ENCODE measurements at regions of chr1 and their contacts with region 1.

Region 1: GRCh38 chr1:60281360-60281932 is 207.9 kb upstream of the C1orf87 start:
- DNase-seq: peak; percentile 55
- H3K4me3 ChIP-seq: no peak overlapping the region
- H3K27ac ChIP-seq: no peak overlapping the region
- H3K4me1 ChIP-seq: peaks cover 2% of the 10 kb centered on the region
- H3K27me3 ChIP-seq: no peaks in the 10 kb centered on the region
- CTCF ChIP-seq: peak; percentile 94 to 98

Region 2: GRCh38 chr1:59776960-59777852 is 504.2 kb before region 1 on chr1:
- CTCF ChIA-PET with region 1: no interaction called
- dilution Hi-C with region 1: no loop called
- in situ Hi-C with region 1: no loop called
- intact Hi-C with region 1: no loop called
- DNase-seq: no peak
- H3K4me3 ChIP-seq: no peak overlapping the region
- H3K27ac ChIP-seq: no peak overlapping the region
- H3K4me1 ChIP-seq: no peaks in the 10 kb centered on the region
- H3K27me3 ChIP-seq: no peaks in the 10 kb centered on the region
- CTCF ChIP-seq: no peak

Region 3: GRCh38 chr1:60153961-60154360 is 127.5 kb before region 1 on chr1:
- CTCF ChIA-PET with region 1: interaction called, 6 read pairs
- dilution Hi-C with region 1: no loop called
- in situ Hi-C with region 1: no loop called
- intact Hi-C with region 1: loop called (anchors 2 kb)
- DNase-seq: no peak
- H3K4me3 ChIP-seq: no peak overlapping the region
- H3K27ac ChIP-seq: no peak overlapping the region
- H3K4me1 ChIP-seq: no peaks in the 10 kb centered on the region
- H3K27me3 ChIP-seq: peaks cover 3% of the 10 kb centered on the region
- CTCF ChIP-seq: no peak

Region 4: DNA sequence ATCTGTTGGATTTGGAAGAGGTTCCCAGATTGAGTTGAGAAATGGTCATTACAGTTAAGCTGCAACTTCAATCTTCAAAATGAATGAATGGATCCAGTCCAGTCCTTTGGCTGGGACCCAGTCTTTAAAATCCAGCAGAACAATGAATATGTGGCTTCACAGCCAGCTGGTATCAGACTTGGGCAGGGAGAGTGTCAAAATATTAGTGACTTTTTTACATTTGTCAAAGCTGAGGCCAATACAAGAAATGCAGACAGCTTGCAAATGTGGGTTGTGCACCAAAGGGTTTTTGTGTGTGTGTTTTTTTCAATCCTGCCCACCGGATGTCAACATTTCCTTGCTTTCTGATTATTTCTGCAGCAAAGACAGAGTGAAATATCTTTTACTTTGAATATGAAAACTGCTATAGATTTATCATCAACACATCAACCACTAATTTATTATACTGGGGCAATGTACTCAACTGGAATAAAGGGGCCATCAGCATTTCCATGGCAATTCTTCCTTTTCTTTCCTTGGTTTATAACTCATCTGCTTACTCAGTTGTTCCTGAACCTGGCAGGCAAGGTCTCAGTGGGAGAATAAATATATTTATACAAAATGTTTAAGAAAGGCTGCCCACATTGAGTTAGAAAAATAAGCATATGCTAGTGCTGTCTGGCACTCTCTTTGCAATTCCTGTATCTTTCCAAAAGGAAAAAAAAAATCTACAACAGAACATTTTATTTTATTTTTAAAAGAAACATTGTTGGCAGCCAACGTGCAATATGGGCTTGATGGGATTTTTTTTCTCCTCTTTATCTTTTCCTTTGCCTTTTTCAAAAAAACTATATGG is 283.7 kb after region 1 on chr1:
- CTCF ChIA-PET with region 1: no interaction called
- dilution Hi-C with region 1: no loop called
- in situ Hi-C with region 1: no loop called
- intact Hi-C with region 1: loop called (anchors 5 kb)
- DNase-seq: no peak
- H3K4me3 ChIP-seq: no peak overlapping the region
- H3K27ac ChIP-seq: no peak overlapping the region
- H3K4me1 ChIP-seq: peaks cover 10% of the 10 kb centered on the region
- H3K27me3 ChIP-seq: no peaks in the 10 kb centered on the region
- CTCF ChIP-seq: no peak

Region 5: GRCh38 chr1:60848583-60849188 is 567.2 kb after region 1 on chr1:
- CTCF ChIA-PET with region 1: no interaction called
- dilution Hi-C with region 1: no loop called
- in situ Hi-C with region 1: no loop called
- intact Hi-C with region 1: loop called (anchors 1 kb)
- DNase-seq: peak; percentile 20
- H3K4me3 ChIP-seq: no peak overlapping the region
- H3K27ac ChIP-seq: no peak overlapping the region
- H3K4me1 ChIP-seq: peaks cover 5% of the 10 kb centered on the region
- H3K27me3 ChIP-seq: no peaks in the 10 kb centered on the region
- CTCF ChIP-seq: peak; percentile 45 to 71

Region 6: GRCh38 chr1:61043010-61043820 is 761.8 kb after region 1 on chr1:
- CTCF ChIA-PET with region 1: no interaction called
- dilution Hi-C with region 1: no loop called
- in situ Hi-C with region 1: no loop called
- intact Hi-C with region 1: loop called (anchors 1 kb)
- DNase-seq: peak; percentile 62
- H3K4me3 ChIP-seq: peak overlapping the region; percentile 52 to 56 (median 56)
- H3K27ac ChIP-seq: no peak overlapping the region
- H3K4me1 ChIP-seq: peaks cover 14% of the 10 kb centered on the region
- H3K27me3 ChIP-seq: no peaks in the 10 kb centered on the region
- CTCF ChIP-seq: peak; percentile 65 to 90

Measured in mammary epithelial cell (primary cell).